Endothelial cell of umbilical vein (primary cell): ENCODE measurements at regions of chr4 and their contacts with region 1.

Region 1: DNA sequence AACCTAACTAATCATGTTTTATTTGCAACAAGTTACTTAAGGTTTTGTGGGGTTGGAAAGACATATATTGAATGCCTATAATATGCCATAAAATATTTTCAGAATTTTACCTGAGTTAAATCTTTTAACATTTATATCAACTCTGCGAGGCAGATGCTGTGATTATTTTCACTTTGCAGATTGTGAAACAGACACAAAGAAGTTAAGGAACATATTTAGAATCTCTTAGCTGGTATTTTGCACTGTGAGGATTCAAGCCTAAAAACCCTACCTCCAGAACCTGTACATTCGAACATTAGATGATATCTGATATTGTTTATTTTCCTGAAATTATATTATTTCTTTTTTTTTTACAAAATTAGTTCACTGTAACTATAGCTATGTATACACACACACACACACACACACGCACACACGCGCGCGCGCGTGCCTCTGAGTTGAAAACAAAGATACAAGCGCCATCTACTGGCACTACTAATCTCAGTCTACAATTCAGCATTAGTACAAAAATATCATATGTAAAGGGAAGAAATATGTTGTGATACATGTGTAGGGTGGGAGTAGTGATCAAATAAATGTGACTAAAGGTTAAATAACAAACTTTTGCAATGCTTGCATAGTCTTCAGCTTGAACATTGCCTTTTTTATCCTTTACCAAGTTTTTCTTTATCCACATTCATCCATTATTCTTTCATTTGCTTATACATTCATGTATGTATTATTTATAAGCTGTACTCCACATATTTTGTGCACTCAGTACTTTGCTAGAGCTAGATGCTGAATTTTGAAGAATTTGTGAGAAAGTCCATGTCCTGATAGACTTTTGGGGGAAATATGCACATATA is 61.5 kb downstream of the ANXA10 start:
- DNase-seq: peak; percentile 79
- H3K4me3 ChIP-seq: peak overlapping the region in 2 of 3 experiments; percentile 18 to 51
- H3K27ac ChIP-seq: no peak overlapping the region
- H3K4me1 ChIP-seq: peaks cover 4% of the 10 kb centered on the region
- H3K27me3 ChIP-seq: no peaks in the 10 kb centered on the region
- CTCF ChIP-seq: peak; percentile 57 to 73
- POLR2A ChIP-seq: peak; percentile 29

Region 2: DNA sequence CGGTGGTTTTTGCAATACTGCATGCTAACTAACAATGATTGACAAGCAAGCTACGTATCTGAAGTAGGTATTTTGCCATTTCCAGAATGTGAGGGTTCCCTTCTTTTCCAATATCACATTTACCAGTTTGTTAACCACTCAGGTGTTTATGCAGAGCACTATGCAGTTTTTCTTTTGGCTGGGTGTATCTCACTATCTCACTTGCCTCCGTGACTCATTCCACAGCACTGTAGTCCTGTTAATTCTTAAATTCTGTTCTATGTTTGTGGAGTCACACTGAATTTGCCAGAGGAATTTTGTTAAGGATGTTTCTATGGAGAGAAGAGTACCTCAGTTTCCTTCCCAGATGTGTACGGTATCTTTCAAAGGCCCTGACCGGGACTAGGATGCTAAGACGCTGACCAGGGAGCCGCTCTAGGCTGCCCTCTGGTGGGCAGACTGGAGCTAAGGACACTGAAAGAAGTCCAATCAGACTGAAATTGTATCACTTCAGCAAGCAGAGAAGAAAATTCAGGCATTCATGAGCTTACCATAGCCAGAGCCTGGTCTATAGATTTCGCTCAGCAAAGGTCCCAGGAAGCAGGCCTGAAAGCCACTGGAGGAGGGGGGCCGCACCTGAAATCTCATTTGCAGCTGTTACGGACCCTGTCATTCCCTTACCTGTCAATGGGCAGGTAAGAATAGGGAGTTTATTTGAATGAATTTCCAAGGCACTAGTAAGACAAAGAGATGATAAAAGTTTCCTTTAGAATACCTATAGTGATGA is 531.2 kb before region 1 on chr4:
- CTCF ChIA-PET with region 1: interaction called, 27 read pairs
- POLR2A ChIA-PET with region 1: no interaction called
- dilution Hi-C with region 1: no loop called
- intact Hi-C with region 1: loop called (anchors 1 kb)
- DNase-seq: peak; percentile 53
- H3K4me3 ChIP-seq: no peak overlapping the region
- H3K27ac ChIP-seq: no peak overlapping the region
- H3K4me1 ChIP-seq: no peaks in the 10 kb centered on the region
- H3K27me3 ChIP-seq: no peaks in the 10 kb centered on the region
- CTCF ChIP-seq: peak; percentile 78 to 91
- POLR2A ChIP-seq: no peak

Region 3: GRCh38 chr4:167989815-167990214 is 164.0 kb before region 1 on chr4:
- CTCF ChIA-PET with region 1: interaction called, 17 read pairs
- POLR2A ChIA-PET with region 1: no interaction called
- dilution Hi-C with region 1: no loop called
- intact Hi-C with region 1: no loop called
- DNase-seq: no peak
- H3K4me3 ChIP-seq: no peak overlapping the region
- H3K27ac ChIP-seq: no peak overlapping the region
- H3K4me1 ChIP-seq: no peaks in the 10 kb centered on the region
- H3K27me3 ChIP-seq: no peaks in the 10 kb centered on the region
- CTCF ChIP-seq: no peak
- POLR2A ChIP-seq: no peak

Region 4: GRCh38 chr4:168076989-168077725 is 76.7 kb before region 1 on chr4:
- CTCF ChIA-PET with region 1: interaction called, 11 read pairs
- POLR2A ChIA-PET with region 1: no interaction called
- dilution Hi-C with region 1: no loop called
- intact Hi-C with region 1: loop called (anchors 1 kb)
- DNase-seq: peak; percentile 81
- H3K4me3 ChIP-seq: no peak overlapping the region
- H3K27ac ChIP-seq: no peak overlapping the region
- H3K4me1 ChIP-seq: peaks cover 8% of the 10 kb centered on the region
- H3K27me3 ChIP-seq: no peaks in the 10 kb centered on the region
- CTCF ChIP-seq: peak; percentile 73 to 75
- POLR2A ChIP-seq: no peak

Region 5: GRCh38 chr4:168143601-168144000 is 10.2 kb before region 1 on chr4:
- CTCF ChIA-PET with region 1: interaction called, 14 read pairs
- POLR2A ChIA-PET with region 1: no interaction called
- dilution Hi-C with region 1: no loop called
- intact Hi-C with region 1: no loop called
- DNase-seq: no peak
- H3K4me3 ChIP-seq: no peak overlapping the region
- H3K27ac ChIP-seq: no peak overlapping the region
- H3K4me1 ChIP-seq: no peaks in the 10 kb centered on the region
- H3K27me3 ChIP-seq: no peaks in the 10 kb centered on the region
- CTCF ChIP-seq: no peak
- POLR2A ChIP-seq: no peak

Region 6: DNA sequence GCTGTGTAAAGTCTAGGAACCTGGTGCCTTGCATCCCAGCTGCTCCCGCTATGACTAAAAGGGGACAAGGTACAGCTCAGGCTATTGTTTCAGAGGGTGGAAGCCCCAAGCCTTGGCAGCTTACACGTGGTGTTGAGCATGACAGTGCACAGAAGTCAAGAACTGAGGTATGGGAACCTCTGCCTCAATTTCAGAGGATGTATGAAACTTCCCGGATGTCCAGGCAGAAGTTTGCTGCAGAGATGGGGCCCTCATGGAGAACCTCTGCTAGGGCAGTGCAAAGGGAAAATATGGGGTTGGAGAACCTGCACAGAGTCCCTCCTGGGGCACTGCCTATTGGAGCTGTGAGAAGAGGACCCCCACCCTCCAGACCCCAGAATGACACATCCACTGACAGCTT is 88.1 kb after region 1 on chr4:
- CTCF ChIA-PET with region 1: no interaction called
- POLR2A ChIA-PET with region 1: no interaction called
- dilution Hi-C with region 1: no loop called
- intact Hi-C with region 1: no loop called
- DNase-seq: no peak
- H3K4me3 ChIP-seq: no peak overlapping the region
- H3K27ac ChIP-seq: no peak overlapping the region
- H3K4me1 ChIP-seq: no peaks in the 10 kb centered on the region
- H3K27me3 ChIP-seq: no peaks in the 10 kb centered on the region
- CTCF ChIP-seq: no peak
- POLR2A ChIP-seq: no peak